CD8-positive, alpha-beta T cell (primary cell): ENCODE measurements at regions of chr1 and their contacts with region 1.

Region 1: GRCh38 chr1:71463144-71463543 is 382.3 kb upstream of the ZRANB2 start:
- DNase-seq: no peak
- ATAC-seq: no peak
- H3K4me3 ChIP-seq: no peak overlapping the region
- H3K4me3 Mint-ChIP-seq: no peak overlapping the region
- H3K27ac ChIP-seq: no peak overlapping the region
- H3K27ac Mint-ChIP-seq: no peak overlapping the region
- H3K4me1 ChIP-seq: no peaks in the 10 kb centered on the region
- H3K4me1 Mint-ChIP-seq: no peaks in the 10 kb centered on the region
- H3K27me3 ChIP-seq: no peaks in the 10 kb centered on the region
- H3K27me3 Mint-ChIP-seq: no peaks in the 10 kb centered on the region
- CTCF ChIP-seq: no peak

Region 2: DNA sequence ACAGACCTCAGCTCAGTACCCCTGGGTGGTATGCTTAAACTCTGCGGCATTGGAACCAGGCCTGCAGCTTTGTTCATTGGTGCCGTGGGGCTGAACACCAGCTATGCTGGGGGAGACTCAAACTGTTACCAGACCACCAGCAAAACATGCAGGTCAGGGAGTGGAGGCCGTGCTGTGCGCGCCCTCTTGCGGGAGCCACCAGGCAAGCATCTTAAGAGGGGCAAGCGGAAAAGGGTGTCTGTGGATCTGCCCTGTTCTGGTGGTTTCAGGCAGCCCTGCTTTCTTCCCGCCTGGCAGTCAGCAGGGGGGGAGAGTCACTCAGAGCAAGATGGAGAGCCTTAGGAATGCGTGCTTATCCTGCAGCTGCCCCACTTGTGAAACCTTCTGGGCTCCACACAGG is 105.4 kb before region 1 on chr1:
- CTCF ChIA-PET with region 1: no interaction called
- POLR2A ChIA-PET with region 1: no interaction called
- intact Hi-C with region 1: no loop called
- DNase-seq: no peak
- ATAC-seq: no peak
- H3K4me3 ChIP-seq: no peak overlapping the region
- H3K4me3 Mint-ChIP-seq: no peak overlapping the region
- H3K27ac ChIP-seq: no peak overlapping the region
- H3K27ac Mint-ChIP-seq: no peak overlapping the region
- H3K4me1 ChIP-seq: no peaks in the 10 kb centered on the region
- H3K4me1 Mint-ChIP-seq: no peaks in the 10 kb centered on the region
- H3K27me3 ChIP-seq: no peaks in the 10 kb centered on the region
- H3K27me3 Mint-ChIP-seq: no peaks in the 10 kb centered on the region
- CTCF ChIP-seq: no peak

Region 3: GRCh38 chr1:71817028-71817427 is 353.9 kb after region 1 on chr1:
- CTCF ChIA-PET with region 1: no interaction called
- POLR2A ChIA-PET with region 1: no interaction called
- intact Hi-C with region 1: no loop called
- DNase-seq: no peak
- ATAC-seq: no peak
- H3K4me3 ChIP-seq: no peak overlapping the region
- H3K4me3 Mint-ChIP-seq: no peak overlapping the region
- H3K27ac ChIP-seq: no peak overlapping the region
- H3K27ac Mint-ChIP-seq: no peak overlapping the region
- H3K4me1 ChIP-seq: no peaks in the 10 kb centered on the region
- H3K4me1 Mint-ChIP-seq: no peaks in the 10 kb centered on the region
- H3K27me3 ChIP-seq: no peaks in the 10 kb centered on the region
- H3K27me3 Mint-ChIP-seq: no peaks in the 10 kb centered on the region
- CTCF ChIP-seq: no peak

Region 4: GRCh38 chr1:71834601-71835441 is 371.7 kb after region 1 on chr1:
- CTCF ChIA-PET with region 1: no interaction called
- POLR2A ChIA-PET with region 1: no interaction called
- intact Hi-C with region 1: loop called in 1 of 2 experiments (anchors 10 kb)
- DNase-seq: no peak
- ATAC-seq: no peak
- H3K4me3 ChIP-seq: no peak overlapping the region
- H3K4me3 Mint-ChIP-seq: no peak overlapping the region
- H3K27ac ChIP-seq: no peak overlapping the region
- H3K27ac Mint-ChIP-seq: no peak overlapping the region
- H3K4me1 ChIP-seq: no peaks in the 10 kb centered on the region
- H3K4me1 Mint-ChIP-seq: no peaks in the 10 kb centered on the region
- H3K27me3 ChIP-seq: no peaks in the 10 kb centered on the region
- H3K27me3 Mint-ChIP-seq: no peaks in the 10 kb centered on the region
- CTCF ChIP-seq: no peak